ENCODE measurements at regions of chr4 and their contacts with region 1.

Region 1: DNA sequence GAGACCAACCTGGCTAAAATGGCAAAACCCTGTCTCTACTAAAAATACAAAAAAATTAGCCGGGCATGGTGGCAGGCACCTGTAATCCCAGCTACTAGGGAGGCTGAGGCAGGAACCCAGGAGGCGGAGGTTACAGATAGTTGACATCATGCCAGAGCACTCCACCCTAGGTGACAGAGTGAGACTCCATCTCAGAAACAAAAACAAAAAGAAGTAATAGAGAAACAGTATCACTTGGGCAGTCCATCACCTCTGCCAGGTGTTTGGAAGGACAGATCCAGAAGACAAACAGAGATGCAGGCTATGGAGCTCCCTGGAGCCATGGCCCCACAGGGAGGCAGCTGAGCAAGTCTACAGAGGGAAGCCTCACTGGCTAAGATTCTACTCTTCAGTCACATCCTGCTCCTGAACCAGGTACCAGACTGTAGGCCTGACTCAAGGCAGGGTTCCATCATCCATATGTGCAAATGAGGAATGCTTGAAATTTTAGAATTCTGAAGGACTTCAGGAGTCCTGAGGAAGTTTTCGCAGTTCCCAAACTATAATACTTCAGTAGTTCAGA is 81.4 kb upstream of the CPEB2 start:
- DNase-seq: no peak
- H3K4me3 Mint-ChIP-seq: no peak overlapping the region
- H3K27ac Mint-ChIP-seq: no peak overlapping the region
- H3K4me1 Mint-ChIP-seq: no peaks in the 10 kb centered on the region
- H3K27me3 Mint-ChIP-seq: peaks cover 2% of the 10 kb centered on the region

Region 2: GRCh38 chr4:15162465-15163283 is 241.8 kb after region 1 on chr4:
- intact Hi-C with region 1: loop called (anchors 10 kb)
- DNase-seq: no peak
- H3K4me3 Mint-ChIP-seq: no peak overlapping the region
- H3K27ac Mint-ChIP-seq: no peak overlapping the region
- H3K4me1 Mint-ChIP-seq: peaks cover 2% of the 10 kb centered on the region
- H3K27me3 Mint-ChIP-seq: peaks cover 17% of the 10 kb centered on the region